ENCODE measurements at regions of chr14 and their contacts with region 1.

Region 1: GRCh38 chr14:20690848-20691523 is 2.4 kb downstream of the ANG start:
- DNase-seq: peak in 1 of 2 donors; percentile 16
- ATAC-seq: peak; percentile 93
- H3K4me3 ChIP-seq: no peak overlapping the region
- H3K27ac ChIP-seq: no peak overlapping the region
- H3K4me1 ChIP-seq: no peaks in the 10 kb centered on the region
- H3K27me3 ChIP-seq: no peaks in the 10 kb centered on the region
- CTCF ChIP-seq: peak; percentile 69 to 88 (median 80)
- POLR2A ChIP-seq: no peak

Region 2: GRCh38 chr14:20327005-20327869 is 363.7 kb before region 1 on chr14:
- in situ Hi-C with region 1: loop called in 3 of 4 experiments (anchors 10 to 25 kb)
- intact Hi-C with region 1: no loop called
- DNase-seq: no peak
- ATAC-seq: peak; percentile 60 to 70
- H3K4me3 ChIP-seq: no peak overlapping the region
- H3K27ac ChIP-seq: peak overlapping the region in 3 of 4 donors; percentile 9 to 57 (median 9)
- H3K4me1 ChIP-seq: peaks cover 10 to 13% of the 10 kb centered on the region in 2 donors
- H3K27me3 ChIP-seq: no peaks in the 10 kb centered on the region
- CTCF ChIP-seq: peak; percentile 57 to 84 (median 78)
- POLR2A ChIP-seq: no peak

Region 3: DNA sequence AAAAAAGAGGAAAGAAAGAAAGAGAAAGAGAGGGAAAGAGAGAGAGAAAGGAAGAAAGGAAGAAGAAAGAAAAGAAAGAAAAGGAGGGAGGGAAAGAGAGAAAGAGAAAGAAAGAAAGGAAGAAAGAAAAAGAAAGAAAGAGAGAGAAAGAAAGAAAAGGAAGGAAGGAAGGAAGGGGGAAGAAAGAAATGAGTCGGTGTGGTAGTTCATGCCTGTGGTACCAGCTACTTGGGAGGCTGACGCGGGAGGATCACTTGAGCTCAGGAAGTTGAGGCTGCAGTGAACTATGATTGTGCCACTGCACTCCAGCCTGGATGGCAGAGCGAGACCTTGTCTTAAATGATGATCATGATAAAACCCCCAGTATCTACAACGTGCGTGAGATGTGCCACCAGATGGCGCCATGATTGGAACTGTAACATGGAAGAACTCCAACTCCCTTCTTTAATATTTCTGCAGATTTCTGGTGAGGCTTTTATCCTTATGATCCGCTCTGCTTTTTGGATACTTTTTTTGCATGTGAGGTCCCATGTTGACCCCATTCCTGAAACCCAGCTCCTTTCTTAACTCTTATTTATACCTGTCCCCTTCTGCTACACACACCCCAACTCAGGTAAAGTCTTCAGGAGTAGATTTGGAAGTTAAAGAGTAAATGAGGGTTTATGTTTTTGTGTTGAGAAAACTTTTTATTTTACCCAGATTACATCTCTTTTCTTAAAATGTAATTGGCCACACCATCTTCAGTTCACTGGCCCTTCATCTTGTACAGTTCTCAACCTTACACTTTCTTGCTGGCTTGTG is 160.0 kb before region 1 on chr14:
- in situ Hi-C with region 1: loop called in 2 of 4 experiments (anchors 5 to 10 kb)
- intact Hi-C with region 1: loop called (anchors 2 kb)
- DNase-seq: peak; percentile 33 to 47
- ATAC-seq: peak; percentile 50 to 58
- H3K4me3 ChIP-seq: no peak overlapping the region
- H3K27ac ChIP-seq: no peak overlapping the region
- H3K4me1 ChIP-seq: no peaks in the 10 kb centered on the region
- H3K27me3 ChIP-seq: peaks cover 0 to 2% (median 0%) of the 10 kb centered on the region in 3 donors
- CTCF ChIP-seq: peak; percentile 24 to 68 (median 40)
- POLR2A ChIP-seq: no peak

Region 4: DNA sequence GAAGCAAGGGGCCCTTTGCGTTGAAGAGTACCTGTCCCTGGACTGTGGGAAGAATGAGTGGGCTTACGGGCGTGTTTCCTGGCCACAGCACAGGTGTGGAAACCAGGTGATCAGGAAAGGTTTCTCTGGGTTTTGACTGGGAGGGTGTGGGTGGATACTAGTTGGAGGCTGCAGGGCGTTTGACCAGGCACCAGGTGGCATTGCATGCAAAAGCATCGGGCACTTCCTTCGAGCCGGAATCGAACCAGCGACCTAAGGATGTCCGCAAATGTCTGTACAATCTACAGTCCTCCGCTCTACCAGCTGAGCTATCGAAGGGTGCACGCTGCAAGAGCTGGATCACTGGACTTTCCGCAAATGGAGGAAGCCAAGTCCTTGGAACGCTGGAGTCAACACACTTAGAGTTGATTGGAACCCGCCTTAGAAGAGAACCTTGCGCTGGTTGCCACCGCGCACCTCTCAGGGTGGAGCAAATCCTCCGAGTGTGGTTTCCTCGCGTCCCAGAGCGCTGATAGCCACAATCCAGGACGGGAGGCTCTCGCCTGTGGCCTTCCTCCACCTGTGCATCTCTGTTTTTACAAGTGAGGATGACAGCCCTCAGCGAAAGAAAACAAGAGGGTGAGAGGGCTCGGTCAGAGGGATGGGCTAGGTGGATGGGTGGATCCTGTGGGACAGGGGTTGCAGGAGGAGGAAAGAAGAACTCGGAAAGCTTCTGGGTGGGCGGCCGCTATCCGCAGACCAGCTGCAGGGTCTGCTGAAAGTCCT is 27.8 kb before region 1 on chr14:
- in situ Hi-C with region 1: no loop called
- intact Hi-C with region 1: loop called (anchors 1 kb)
- DNase-seq: peak; percentile 6 to 19
- ATAC-seq: no peak
- H3K4me3 ChIP-seq: peak overlapping the region in 2 of 4 donors; percentile 21 to 28
- H3K27ac ChIP-seq: no peak overlapping the region
- H3K4me1 ChIP-seq: no peaks in the 10 kb centered on the region
- H3K27me3 ChIP-seq: peaks cover 59 to 64% (median 61%) of the 10 kb centered on the region in 3 donors
- CTCF ChIP-seq: peak in 4 of 5 experiments; percentile 27 to 49 (median 44)
- POLR2A ChIP-seq: no peak

Region 5: DNA sequence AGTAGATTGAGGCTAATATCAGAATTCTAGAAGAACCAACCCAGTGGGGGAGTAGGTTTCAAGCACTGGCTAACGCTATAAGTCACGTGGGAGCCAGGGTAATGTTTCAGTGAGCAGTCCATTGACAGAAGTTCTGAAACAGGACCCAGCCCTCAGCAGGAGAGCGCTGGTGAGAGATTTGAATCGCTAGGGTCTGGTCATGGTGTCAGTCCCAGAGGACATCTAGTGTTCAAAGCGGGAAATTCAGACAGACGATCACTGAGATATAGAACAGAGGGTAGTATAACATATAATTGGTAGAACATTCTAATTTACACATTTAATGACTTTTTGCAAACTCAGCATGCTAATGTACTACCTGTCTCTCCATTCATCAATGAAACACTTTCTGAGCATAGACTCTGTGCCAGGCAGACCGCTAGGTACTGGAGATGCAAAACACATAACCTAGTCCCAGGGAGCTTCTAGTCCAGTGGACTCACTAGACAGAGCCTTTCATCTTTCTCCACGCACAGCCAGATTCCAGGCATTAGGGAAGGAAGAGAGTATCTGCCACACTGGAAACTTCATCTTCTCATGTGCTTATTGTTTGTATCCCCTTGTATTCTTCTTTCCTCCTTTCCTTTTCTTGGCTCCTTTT is 164.8 kb after region 1 on chr14:
- in situ Hi-C with region 1: loop called in 2 of 4 experiments (anchors 5 to 10 kb)
- intact Hi-C with region 1: no loop called
- DNase-seq: peak in 1 of 2 donors; percentile 36
- ATAC-seq: peak; percentile 80 to 88
- H3K4me3 ChIP-seq: no peak overlapping the region
- H3K27ac ChIP-seq: no peak overlapping the region
- H3K4me1 ChIP-seq: peaks cover 0 to 4% of the 10 kb centered on the region in 2 donors
- H3K27me3 ChIP-seq: no peaks in the 10 kb centered on the region
- CTCF ChIP-seq: peak; percentile 28 to 67 (median 55)
- POLR2A ChIP-seq: no peak

Region 6: DNA sequence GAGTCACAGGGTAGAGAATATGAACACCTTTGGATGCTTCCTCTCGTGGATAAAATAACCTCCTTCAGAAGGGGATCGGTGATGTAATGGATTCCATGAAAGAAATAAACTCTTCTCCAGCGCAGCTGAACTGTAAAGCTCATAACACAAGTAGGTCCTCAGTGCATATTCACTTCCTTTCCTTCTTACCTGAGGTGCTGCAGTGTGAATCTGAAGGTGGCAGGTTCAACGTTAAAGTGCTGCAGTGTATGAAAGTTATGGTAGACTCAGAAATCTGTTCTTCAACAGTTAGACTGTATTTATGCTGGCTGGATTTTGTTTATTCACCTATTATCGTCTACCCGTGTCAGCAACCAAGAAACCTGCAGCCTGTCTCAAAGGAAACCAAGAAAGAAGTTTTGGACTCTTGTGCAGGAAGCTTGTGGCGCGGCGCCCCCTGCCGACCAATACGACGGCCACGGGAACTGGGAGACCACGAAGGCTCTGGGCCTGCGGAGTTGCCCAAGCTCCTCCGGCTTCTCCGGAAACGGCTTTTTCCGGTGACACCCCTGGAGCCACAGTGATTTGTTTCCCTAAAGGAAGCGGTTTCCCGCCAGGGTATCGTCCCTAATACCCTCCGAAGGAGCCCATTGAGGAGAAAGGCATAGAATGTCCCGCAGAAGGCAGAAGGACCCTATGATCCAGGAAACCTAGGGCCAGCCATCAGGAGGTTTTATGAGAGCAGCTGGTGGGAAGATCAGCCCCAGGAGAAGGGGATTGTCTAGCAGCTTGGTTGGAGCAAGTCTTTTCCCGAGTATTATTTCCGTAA is 182.6 kb after region 1 on chr14:
- in situ Hi-C with region 1: no loop called
- intact Hi-C with region 1: no loop called
- DNase-seq: peak; percentile 33 to 56
- ATAC-seq: peak in 1 of 2 donors; percentile 49
- H3K4me3 ChIP-seq: peak overlapping the region in 3 of 4 donors; percentile 0 to 34 (median 23)
- H3K27ac ChIP-seq: no peak overlapping the region
- H3K4me1 ChIP-seq: no peaks in the 10 kb centered on the region
- H3K27me3 ChIP-seq: peaks cover 0 to 3% (median 0%) of the 10 kb centered on the region in 3 donors
- CTCF ChIP-seq: peak in 4 of 5 experiments; percentile 29 to 71 (median 56)
- POLR2A ChIP-seq: no peak

Region 7: DNA sequence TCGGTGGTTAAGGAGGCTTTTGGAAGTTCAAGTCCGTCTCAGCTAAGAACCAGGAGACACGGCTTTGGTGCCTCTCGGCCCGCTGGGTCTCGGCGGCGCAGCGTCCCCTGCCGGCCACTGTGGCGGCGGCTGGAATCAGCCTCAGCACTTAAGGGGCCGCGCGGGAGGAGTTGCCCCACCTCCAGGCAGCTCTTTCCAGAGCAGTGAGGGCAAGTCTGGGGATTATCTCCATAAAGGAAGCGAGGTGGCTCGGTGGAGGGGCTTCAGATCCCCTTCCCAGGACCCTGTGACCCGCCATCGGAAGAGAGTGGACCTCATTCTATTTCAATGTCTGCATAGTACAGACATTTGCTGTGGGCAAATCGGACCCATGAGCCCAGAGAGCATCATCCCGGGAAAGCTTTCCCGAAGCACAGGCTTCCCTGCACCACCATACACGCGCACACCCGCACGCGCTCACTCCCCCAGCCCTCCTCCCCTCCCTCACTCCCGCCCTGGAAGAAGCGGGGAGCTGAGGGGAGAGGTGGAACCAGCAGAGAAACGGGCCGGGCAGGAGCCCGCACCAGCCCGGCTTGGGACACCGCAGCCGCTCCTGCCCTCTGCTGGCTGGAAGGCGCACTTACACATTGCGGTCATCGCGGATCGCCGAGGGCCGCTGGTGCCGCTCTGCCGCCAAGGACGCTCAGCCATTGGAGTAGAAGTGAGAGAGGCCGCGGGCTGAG is 280.2 kb after region 1 on chr14:
- in situ Hi-C with region 1: loop called in 1 of 4 experiments (anchors 10 kb)
- intact Hi-C with region 1: loop called (anchors 5 kb)
- DNase-seq: peak; percentile 62 to 74
- ATAC-seq: peak; percentile 92 to 93
- H3K4me3 ChIP-seq: peak overlapping the region; percentile 68 to 80 (median 71)
- H3K27ac ChIP-seq: peak overlapping the region; percentile 40 to 67 (median 59)
- H3K4me1 ChIP-seq: peaks cover 5 to 7% of the 10 kb centered on the region in 2 donors
- H3K27me3 ChIP-seq: no peaks in the 10 kb centered on the region
- CTCF ChIP-seq: peak; percentile 77 to 88 (median 84)
- POLR2A ChIP-seq: no peak